ENCODE measurements at regions of chr2 and their contacts with region 1.

Region 1: DNA sequence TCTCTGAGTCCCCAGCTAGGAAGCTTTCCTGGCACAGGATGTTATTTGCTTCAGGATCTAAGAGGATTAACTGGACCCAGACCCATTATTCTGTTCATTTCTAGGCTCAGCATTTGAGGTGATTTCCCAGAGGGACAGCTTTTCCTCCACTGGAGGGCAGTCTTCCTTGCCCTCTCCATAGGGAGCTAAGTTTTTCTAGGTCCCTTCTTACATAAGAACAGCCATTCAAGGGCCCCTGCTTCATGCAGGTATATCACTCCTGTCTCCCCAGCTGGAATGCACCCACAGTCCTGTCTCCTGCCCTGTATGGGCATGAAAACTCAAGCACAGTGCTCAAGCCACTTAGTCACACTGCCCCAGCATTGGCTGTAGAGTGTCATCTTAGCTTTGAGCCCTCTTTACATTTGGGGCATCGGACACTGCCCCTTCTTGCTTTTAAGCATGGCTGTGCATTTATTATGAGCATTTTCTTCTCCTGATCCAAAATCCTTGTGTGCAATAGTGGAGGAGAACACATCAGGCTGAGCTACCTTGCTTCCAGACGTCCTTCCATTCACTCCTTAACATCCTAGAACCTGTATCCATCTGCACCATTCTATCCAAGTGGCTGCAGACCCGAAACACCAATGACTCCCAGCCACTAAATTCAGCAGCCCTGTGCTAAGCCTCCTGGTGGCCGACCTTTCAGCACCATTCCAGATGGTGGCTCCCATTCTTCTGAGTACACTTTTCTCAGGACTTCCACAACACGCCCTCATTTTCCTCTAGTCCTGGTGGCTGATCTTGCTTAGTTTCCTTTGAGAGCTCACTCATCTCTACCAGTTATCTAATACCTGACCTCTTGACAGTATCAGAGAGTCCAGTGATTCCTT is 80.0 kb downstream of the COPS8 start:
- DNase-seq: peak; percentile 35
- ATAC-seq: peak; percentile 85
- H3K4me3 ChIP-seq: no peak overlapping the region
- H3K27ac ChIP-seq: no peak overlapping the region
- H3K4me1 ChIP-seq: no peaks in the 10 kb centered on the region
- H3K27me3 ChIP-seq: no peaks in the 10 kb centered on the region; the same call in 1 of the 2 replicates
- CTCF ChIP-seq: peak; percentile 76 to 87 (median 80)
- POLR2A ChIP-seq: no peak
- RAD21 ChIP-seq: peak; percentile 77

Region 2: GRCh38 chr2:237141556-237141955 is 24.1 kb before region 1 on chr2:
- CTCF ChIA-PET with region 1: no interaction called
- POLR2A ChIA-PET with region 1: no interaction called
- RAD21 ChIA-PET with region 1: no interaction called
- intact Hi-C with region 1: no loop called
- DNase-seq: no peak
- ATAC-seq: no peak
- H3K4me3 ChIP-seq: no peak overlapping the region
- H3K27ac ChIP-seq: no peak overlapping the region
- H3K4me1 ChIP-seq: no peaks in the 10 kb centered on the region
- H3K27me3 ChIP-seq: no peaks in the 10 kb centered on the region
- CTCF ChIP-seq: no peak
- POLR2A ChIP-seq: no peak
- RAD21 ChIP-seq: no peak

Region 3: DNA sequence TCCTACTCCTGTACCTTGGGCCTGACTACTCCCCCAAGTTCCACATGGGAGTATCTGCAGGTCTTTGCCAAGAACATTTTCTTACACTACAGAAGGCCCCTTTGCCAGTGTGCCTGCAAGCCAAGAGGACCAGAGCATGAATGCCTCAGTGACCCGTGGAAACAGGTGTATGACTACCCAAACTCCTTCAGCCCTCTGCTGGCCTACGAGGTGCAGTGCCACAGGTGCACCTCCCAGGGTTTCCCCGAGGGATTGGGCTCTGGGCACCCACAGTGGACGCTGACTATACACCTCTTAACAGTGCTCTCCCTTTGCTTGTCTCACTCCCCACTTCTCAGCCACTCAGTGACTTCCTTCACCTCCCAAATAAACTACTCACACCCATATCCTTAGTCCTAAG is 156.9 kb after region 1 on chr2:
- CTCF ChIA-PET with region 1: interaction called, 8 read pairs
- POLR2A ChIA-PET with region 1: no interaction called
- RAD21 ChIA-PET with region 1: no interaction called
- intact Hi-C with region 1: loop called (anchors 1 kb)
- DNase-seq: peak; percentile 37
- ATAC-seq: peak; percentile 100
- H3K4me3 ChIP-seq: no peak overlapping the region
- H3K27ac ChIP-seq: no peak overlapping the region
- H3K4me1 ChIP-seq: no peaks in the 10 kb centered on the region
- H3K27me3 ChIP-seq: peaks cover 6% of the 10 kb centered on the region; the same call in 1 of the 2 replicates
- CTCF ChIP-seq: peak; percentile 76 to 81 (median 81)
- POLR2A ChIP-seq: no peak
- RAD21 ChIP-seq: peak; percentile 88

Region 4: GRCh38 chr2:237408335-237409000 is 242.8 kb after region 1 on chr2:
- CTCF ChIA-PET with region 1: interaction called, 19 read pairs
- POLR2A ChIA-PET with region 1: no interaction called
- RAD21 ChIA-PET with region 1: no interaction called
- intact Hi-C with region 1: loop called (anchors 1 kb)
- DNase-seq: no peak
- ATAC-seq: no peak
- H3K4me3 ChIP-seq: no peak overlapping the region
- H3K27ac ChIP-seq: no peak overlapping the region
- H3K4me1 ChIP-seq: peaks cover 0 to 3% of the 10 kb centered on the region in 2 experiments; a peak in 1 of 4 replicates
- H3K27me3 ChIP-seq: peaks cover 59% of the 10 kb centered on the region
- CTCF ChIP-seq: no peak
- POLR2A ChIP-seq: no peak
- RAD21 ChIP-seq: no peak

Region 5: DNA sequence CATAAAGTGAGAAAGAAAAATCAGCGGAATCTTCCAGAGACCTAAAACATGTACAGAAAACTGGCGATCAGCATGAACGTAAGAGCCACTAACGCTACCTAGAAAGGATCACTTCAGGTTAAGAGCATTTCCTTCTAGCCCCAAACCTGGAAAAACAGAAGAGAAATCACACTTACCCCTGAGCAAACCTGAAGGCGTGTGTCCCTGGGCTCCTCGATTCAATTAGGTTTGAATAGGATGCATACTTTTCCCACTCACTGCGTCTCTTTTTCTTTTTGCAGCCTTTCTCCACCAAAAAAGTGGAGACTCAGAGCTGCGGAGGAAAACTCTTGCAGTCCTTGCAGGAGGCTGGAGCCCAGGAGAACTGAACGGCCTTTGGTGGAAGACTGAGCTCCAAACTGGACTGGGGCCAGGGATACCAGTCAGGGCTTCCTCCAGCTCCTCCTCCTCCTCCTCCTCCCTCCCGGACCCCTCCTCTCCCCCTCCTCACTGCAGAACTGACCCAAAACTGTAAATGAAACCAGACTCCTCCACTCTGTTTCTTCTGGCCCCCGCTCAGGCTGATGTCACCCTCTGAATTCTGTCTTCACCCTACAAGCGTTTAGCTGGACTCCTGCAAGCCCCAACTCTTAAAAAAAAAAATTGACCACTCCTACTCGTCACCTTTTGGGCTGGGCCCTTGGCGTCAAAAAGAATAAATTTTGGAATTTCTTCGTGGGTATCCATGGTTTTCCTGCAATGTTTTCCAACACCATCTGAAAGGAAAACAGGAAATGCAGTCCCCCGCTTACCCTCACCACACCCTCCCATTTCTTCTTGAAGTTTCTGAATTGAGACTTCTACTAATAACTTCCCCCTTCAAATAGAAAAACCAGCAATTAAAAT is 248.4 kb after region 1 on chr2 and contains the start of gene COL6A3:
- CTCF ChIA-PET with region 1: interaction called, 19 read pairs
- POLR2A ChIA-PET with region 1: no interaction called
- RAD21 ChIA-PET with region 1: no interaction called
- intact Hi-C with region 1: loop called (anchors 1 kb)
- DNase-seq: no peak
- ATAC-seq: no peak
- H3K4me3 ChIP-seq: no peak within 1 kb of the TSS
- H3K27ac ChIP-seq: no peak within 1 kb of the TSS
- H3K4me1 ChIP-seq: peaks cover 0 to 3% of the 10 kb centered on the region in 2 experiments; a peak in 1 of 4 replicates
- H3K27me3 ChIP-seq: peaks cover 25% of the 10 kb centered on the region; the same call in 1 of the 2 replicates
- CTCF ChIP-seq: no peak
- POLR2A ChIP-seq: no peak
- RAD21 ChIP-seq: no peak
- total RNA-seq, gene COL6A3: 1.2 TPM

Region 6: DNA sequence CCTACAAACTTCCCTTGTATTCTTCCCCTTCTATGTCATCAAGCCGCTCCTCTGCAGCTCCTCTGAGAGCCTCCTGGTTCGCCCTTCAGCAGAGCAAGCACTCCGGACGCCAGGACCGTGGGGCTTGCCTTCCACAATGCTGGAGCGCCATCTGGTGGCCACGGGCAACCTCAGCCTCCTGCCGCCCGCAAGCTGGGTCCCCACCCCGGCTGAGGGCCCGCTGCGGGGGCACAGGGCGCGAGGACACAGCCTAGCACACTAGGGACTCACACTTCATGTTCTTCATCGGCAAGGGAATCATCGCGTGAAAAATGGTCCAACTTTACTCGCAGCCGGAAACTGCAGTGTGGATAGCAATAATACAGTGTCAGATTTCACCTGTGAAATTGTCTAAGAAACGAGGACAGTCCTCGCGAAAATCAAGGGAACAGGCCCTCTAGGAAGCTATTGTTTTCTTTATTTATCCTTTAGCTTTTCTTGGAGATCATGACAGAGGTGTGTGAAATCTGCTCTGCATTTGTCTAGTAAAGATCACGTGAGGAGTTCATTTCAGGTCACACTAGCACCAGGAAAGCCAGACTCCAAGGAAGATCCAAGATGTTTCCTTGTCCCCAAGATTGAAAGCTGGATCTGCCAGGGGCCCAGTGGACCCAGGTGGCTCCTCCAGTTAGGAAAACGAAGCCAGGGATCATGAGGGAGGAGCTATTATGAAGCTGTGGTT is 406.5 kb after region 1 on chr2:
- CTCF ChIA-PET with region 1: interaction called, 26 read pairs
- POLR2A ChIA-PET with region 1: no interaction called
- RAD21 ChIA-PET with region 1: interaction called in 1 of 2 experiments, 7 read pairs
- intact Hi-C with region 1: loop called (anchors 2 kb)
- DNase-seq: peak; percentile 79
- ATAC-seq: peak; percentile 90
- H3K4me3 ChIP-seq: no peak overlapping the region
- H3K27ac ChIP-seq: no peak overlapping the region
- H3K4me1 ChIP-seq: peaks cover 12 to 30% of the 10 kb centered on the region in 2 experiments
- H3K27me3 ChIP-seq: no peaks in the 10 kb centered on the region
- CTCF ChIP-seq: peak; percentile 93 to 98 (median 97)
- POLR2A ChIP-seq: no peak
- RAD21 ChIP-seq: peak; percentile 99